ENCODE measurements at regions of chr7 and their contacts with region 1.

Region 1: GRCh38 chr7:140175221-140176121 is 1.3 kb downstream of the KDM7A start:
- DNase-seq: peak; percentile 56 to 88 (median 73)

Region 2: GRCh38 chr7:140326116-140326928 is 150.9 kb after region 1 on chr7:
- intact Hi-C with region 1: loop called (anchors 5 kb)
- DNase-seq: peak; percentile 46 to 91 (median 77)

Region 3: DNA sequence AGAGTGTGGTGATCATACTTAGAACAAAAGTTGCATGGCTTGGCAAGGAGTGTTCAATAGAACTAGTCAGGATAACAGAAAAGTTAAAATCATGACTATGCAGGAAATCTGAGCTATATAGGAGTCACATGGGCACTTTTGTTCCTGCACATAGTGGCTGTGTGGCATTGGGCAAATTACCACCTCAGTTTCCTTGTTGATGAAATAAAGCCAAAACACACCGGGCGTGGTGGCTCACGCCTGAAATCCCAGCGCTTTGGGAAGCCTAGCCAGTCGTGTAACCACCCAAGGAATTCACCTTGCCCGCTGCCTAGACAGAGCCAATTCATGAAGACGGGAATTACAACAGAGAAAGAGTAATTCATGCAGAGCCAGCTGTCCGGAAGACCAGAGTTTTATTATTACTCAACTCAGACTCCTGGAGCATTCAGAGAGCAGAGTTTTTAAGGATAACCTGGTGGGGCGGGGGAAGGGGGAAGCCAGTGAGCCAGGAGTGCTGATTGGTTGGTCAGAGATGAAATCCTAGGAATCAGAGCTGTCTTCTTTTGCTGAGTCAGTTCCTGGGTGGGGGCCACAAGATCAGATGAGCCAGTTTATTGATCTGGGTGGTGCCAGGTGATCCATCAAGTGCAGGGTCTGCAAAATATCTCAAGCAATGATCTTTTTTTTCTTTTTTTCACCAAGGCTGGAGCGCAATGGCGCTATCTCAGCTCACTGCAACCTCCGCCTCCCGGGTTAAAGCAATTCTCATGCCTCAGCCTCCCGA is 310.2 kb after region 1 on chr7:
- intact Hi-C with region 1: loop called (anchors 10 kb)
- DNase-seq: no peak

Measured in head of caudate nucleus (tissue), 42 donors.